B cell (primary cell): ENCODE measurements at regions of chr1 and their contacts with region 1.

Region 1: GRCh38 chr1:39258146-39258924 is 53.8 kb downstream of the MACF1 start:
- DNase-seq: peak; percentile 76
- ATAC-seq: peak; percentile 65
- H3K4me3 ChIP-seq: no peak overlapping the region
- H3K4me3 Mint-ChIP-seq: no peak overlapping the region
- H3K27ac ChIP-seq: peak overlapping the region in 1 of 2 donors; percentile 53
- H3K27ac Mint-ChIP-seq: peak overlapping the region; percentile 59
- H3K4me1 ChIP-seq: peaks cover 12 to 30% of the 10 kb centered on the region in 2 donors
- H3K4me1 Mint-ChIP-seq: peaks cover 30% of the 10 kb centered on the region
- H3K27me3 ChIP-seq: no peaks in the 10 kb centered on the region
- H3K27me3 Mint-ChIP-seq: no peaks in the 10 kb centered on the region
- CTCF ChIP-seq: peak; percentile 92

Region 2: DNA sequence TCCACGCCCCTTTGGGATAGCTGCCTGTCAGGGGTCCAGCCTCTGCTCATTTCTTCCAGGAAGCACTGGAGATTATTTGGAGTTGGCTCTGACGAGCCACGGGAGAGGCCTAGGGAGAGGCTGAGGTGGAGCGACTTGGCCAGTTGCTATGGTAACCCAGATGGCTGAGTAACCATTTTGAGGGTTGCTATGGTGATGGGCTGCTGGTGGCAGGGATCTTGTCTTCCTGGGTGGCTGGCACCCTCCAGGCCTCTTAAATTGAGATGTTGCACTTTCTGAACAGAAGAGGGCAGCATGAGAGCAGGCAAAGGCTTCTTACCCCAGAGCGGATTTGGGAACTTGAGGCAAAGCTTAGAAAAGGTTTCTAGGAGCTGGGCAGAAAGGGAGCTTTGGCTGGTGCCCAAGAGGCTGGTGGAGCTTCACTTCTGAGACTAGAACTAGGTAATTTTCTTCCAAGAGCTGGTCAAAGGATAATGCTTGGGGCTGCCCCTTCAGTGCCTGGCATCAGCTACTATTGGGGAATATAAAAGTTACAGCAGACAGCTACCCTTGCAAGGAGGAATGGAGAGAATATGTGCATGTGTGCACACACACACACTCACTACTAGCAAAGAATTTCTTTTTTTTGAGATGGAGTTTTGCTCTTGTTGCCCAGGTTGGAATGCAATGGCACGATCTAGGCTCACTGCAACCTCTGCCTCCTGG is 159.6 kb before region 1 on chr1:
- CTCF ChIA-PET with region 1: interaction called, 175 read pairs
- POLR2A ChIA-PET with region 1: no interaction called
- intact Hi-C with region 1: loop called (anchors 1 kb)
- DNase-seq: peak; percentile 85
- ATAC-seq: peak; percentile 34
- H3K4me3 ChIP-seq: no peak overlapping the region
- H3K4me3 Mint-ChIP-seq: no peak overlapping the region
- H3K27ac ChIP-seq: no peak overlapping the region
- H3K27ac Mint-ChIP-seq: peak overlapping the region; percentile 6
- H3K4me1 ChIP-seq: peaks cover 17 to 23% of the 10 kb centered on the region in 2 donors
- H3K4me1 Mint-ChIP-seq: peaks cover 22% of the 10 kb centered on the region
- H3K27me3 ChIP-seq: no peaks in the 10 kb centered on the region
- H3K27me3 Mint-ChIP-seq: no peaks in the 10 kb centered on the region
- CTCF ChIP-seq: peak; percentile 79

Region 3: DNA sequence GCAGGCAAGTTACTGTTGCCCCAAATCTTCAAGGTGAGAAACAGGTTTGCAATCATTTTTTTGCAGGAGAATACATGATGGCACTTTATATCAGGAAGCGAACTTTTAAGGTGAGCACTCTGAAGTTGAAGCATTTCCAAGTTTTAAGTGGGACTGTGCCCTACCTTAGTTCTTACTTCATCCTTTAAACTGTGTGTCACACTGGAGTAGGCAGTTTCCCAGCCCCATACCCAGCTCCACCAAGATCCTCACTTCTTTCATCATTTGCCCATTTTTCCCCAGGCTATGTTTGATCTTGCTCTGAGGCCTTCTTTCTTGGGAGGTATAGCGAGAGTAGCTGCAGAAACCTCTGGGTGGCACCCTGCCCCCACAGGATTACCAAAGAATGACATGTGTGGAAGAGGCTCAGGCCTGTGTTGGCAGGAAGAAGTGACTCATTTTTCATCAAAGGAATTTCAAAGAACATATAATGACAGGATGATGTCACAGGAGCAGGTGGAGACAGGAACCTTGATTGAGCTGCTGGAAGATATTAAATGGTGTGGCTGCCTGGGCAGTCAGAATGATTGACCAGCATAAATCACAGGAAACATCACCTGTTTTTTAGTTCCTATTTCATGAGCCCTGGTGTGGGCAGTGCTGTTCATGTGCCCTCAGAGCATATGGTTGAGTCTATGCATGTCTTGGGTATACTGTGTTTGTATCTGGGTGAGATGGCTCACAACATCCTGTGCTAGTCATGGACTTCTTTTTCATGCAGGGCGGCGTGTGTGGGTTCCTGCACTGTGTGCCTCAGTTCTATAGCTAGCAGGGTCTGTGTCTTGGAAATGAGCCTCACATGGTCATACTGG is 74.6 kb before region 1 on chr1:
- CTCF ChIA-PET with region 1: interaction called, 439 read pairs
- POLR2A ChIA-PET with region 1: no interaction called
- intact Hi-C with region 1: no loop called
- DNase-seq: peak; percentile 63
- ATAC-seq: peak; percentile 83
- H3K4me3 ChIP-seq: no peak overlapping the region
- H3K4me3 Mint-ChIP-seq: peak overlapping the region; percentile 13
- H3K27ac ChIP-seq: peak overlapping the region; percentile 46 to 75
- H3K27ac Mint-ChIP-seq: peak overlapping the region; percentile 69
- H3K4me1 ChIP-seq: peaks cover 12 to 13% of the 10 kb centered on the region in 2 donors
- H3K4me1 Mint-ChIP-seq: peaks cover 24% of the 10 kb centered on the region
- H3K27me3 ChIP-seq: no peaks in the 10 kb centered on the region
- H3K27me3 Mint-ChIP-seq: no peaks in the 10 kb centered on the region
- CTCF ChIP-seq: peak; percentile 72

Region 4: DNA sequence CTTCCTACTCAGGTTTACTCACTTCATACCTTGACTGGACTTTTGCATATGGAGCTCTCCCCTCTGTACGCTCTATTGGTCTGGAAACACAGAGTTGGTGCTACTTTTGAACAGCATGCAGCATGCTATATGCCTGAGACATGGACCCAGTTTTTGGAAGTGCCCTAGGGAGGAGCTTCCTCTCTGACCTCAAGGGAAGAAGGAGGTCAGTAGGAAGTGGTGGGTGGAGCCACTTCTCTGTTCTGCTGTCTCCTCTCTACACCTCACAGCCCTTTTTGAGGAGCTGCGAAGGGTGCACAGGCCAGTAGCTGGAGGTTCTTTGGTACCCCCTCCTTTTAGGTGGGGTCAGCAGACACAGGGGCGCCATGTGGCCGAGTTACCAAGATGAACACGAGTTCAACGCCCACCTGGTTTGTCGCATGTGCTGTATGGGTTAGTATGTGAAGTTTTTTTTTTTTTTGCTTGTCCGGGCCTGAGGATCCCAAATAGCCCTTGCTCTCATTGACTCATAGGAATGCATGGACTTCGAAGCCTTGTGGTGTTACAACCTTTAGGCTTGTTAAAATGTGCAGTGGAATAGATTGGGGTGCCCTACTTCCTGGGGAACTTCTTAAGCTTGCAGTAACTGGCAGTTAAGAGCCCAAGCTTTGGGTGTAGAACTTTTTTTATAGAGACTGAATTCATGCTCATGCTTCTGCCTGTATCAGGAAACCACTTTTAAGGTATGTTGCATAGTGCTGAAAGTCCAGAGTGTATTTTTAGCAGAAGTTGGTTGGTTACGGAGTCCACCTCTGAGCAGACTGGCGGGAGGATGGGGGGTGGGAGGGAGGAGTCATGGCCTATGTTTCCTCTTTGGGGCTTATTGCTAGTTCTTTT is 43.1 kb before region 1 on chr1:
- CTCF ChIA-PET with region 1: interaction called, 32 read pairs
- POLR2A ChIA-PET with region 1: no interaction called
- intact Hi-C with region 1: no loop called
- DNase-seq: peak; percentile 77
- ATAC-seq: peak; percentile 81
- H3K4me3 ChIP-seq: peak overlapping the region; percentile 45 to 79 (median 61)
- H3K4me3 Mint-ChIP-seq: peak overlapping the region; percentile 89
- H3K27ac ChIP-seq: peak overlapping the region; percentile 70 to 92
- H3K27ac Mint-ChIP-seq: peak overlapping the region; percentile 91
- H3K4me1 ChIP-seq: peaks cover 36 to 44% of the 10 kb centered on the region in 2 donors
- H3K4me1 Mint-ChIP-seq: peaks cover 49% of the 10 kb centered on the region
- H3K27me3 ChIP-seq: no peaks in the 10 kb centered on the region
- H3K27me3 Mint-ChIP-seq: no peaks in the 10 kb centered on the region
- CTCF ChIP-seq: no peak

Region 5: GRCh38 chr1:39275836-39276507 is 17.6 kb after region 1 on chr1:
- CTCF ChIA-PET with region 1: interaction called, 67 read pairs
- POLR2A ChIA-PET with region 1: interaction called, 12 read pairs
- intact Hi-C with region 1: no loop called
- DNase-seq: no peak
- ATAC-seq: no peak
- H3K4me3 ChIP-seq: no peak overlapping the region
- H3K4me3 Mint-ChIP-seq: no peak overlapping the region
- H3K27ac ChIP-seq: peak overlapping the region in 1 of 2 donors; percentile 16
- H3K27ac Mint-ChIP-seq: no peak overlapping the region
- H3K4me1 ChIP-seq: peaks cover 26 to 34% of the 10 kb centered on the region in 2 donors
- H3K4me1 Mint-ChIP-seq: peaks cover 55% of the 10 kb centered on the region
- H3K27me3 ChIP-seq: no peaks in the 10 kb centered on the region
- H3K27me3 Mint-ChIP-seq: no peaks in the 10 kb centered on the region
- CTCF ChIP-seq: no peak